HCT116 (cell line): ENCODE measurements at regions of chr2 and their contacts with region 1.

Region 1: GRCh38 chr2:241659150-241659739 is 21.8 kb downstream of the ATG4B start:
- DNase-seq: no peak
- ATAC-seq: peak; percentile 76
- H3K4me3 ChIP-seq: no peak overlapping the region
- H3K27ac ChIP-seq: no peak overlapping the region
- H3K4me1 ChIP-seq: no peaks in the 10 kb centered on the region
- H3K27me3 ChIP-seq: no peaks in the 10 kb centered on the region
- CTCF ChIP-seq: peak; percentile 38 to 62 (median 54); a peak in 4 of 6 replicates
- POLR2A ChIP-seq: no peak
- RAD21 ChIP-seq: peak; percentile 69

Region 2: GRCh38 chr2:241482176-241482955 is 176.9 kb before region 1 on chr2:
- CTCF ChIA-PET with region 1: no interaction called
- POLR2A ChIA-PET with region 1: no interaction called
- RAD21 ChIA-PET with region 1: no interaction called
- intact Hi-C with region 1: no loop called
- DNase-seq: no peak
- ATAC-seq: no peak
- H3K4me3 ChIP-seq: no peak overlapping the region
- H3K27ac ChIP-seq: no peak overlapping the region
- H3K4me1 ChIP-seq: no peaks in the 10 kb centered on the region
- H3K27me3 ChIP-seq: no peaks in the 10 kb centered on the region
- CTCF ChIP-seq: no peak
- POLR2A ChIP-seq: no peak
- RAD21 ChIP-seq: no peak

Region 3: DNA sequence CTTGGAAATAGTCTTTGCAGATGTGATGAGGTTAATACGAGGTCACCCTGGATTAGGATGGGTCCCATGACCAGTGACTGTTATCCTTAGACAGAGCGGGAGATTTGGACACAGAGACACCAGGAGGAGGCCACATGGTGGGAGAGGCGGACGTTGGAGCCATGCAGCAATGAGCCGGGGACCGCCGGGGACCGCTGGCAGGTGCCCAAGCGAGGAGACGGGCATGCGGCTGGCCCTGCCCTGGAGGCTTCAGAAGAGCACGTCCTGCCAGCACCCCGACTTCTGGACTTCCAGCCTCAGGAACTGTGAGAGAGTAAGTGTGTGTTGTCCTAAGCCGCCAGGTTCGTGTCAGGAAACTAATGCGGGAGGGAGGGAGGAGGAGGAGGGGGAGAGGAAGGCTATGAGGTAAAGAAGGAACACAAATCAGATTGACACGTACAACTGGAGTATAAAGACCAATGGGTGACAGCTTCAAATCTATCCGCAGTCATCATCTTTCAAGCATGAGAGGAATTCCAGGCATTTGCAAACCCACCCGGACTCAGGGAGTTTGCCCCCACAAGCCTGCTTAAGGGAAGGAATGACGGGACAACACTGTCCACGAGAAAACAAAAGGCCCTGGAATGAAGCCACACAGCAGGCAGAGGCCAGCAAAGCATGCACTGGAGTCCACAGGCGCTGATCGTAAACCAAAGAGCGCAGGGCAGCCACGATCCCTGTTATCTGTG is 112.3 kb before region 1 on chr2:
- CTCF ChIA-PET with region 1: no interaction called
- POLR2A ChIA-PET with region 1: no interaction called
- RAD21 ChIA-PET with region 1: interaction called in 1 of 2 experiments, 4 read pairs
- intact Hi-C with region 1: loop called (anchors 1 kb)
- DNase-seq: no peak
- ATAC-seq: no peak
- H3K4me3 ChIP-seq: no peak overlapping the region
- H3K27ac ChIP-seq: no peak overlapping the region
- H3K4me1 ChIP-seq: peaks cover 9 to 37% of the 10 kb centered on the region in 2 experiments
- H3K27me3 ChIP-seq: no peaks in the 10 kb centered on the region
- CTCF ChIP-seq: no peak
- POLR2A ChIP-seq: no peak
- RAD21 ChIP-seq: no peak

Region 4: DNA sequence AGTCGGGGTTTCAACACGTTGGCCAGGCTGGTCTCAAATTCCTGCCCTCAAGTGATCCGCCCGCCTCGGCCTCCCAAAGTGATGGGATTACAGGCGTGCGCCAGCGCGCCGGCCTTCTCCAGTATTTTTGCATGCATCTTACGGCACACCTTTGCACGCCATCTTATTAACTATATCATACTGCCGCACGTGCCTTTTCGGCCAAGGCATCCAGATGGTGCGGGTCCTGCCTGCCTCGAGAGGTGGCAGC is 41.8 kb after region 1 on chr2:
- CTCF ChIA-PET with region 1: no interaction called
- POLR2A ChIA-PET with region 1: no interaction called
- RAD21 ChIA-PET with region 1: no interaction called
- intact Hi-C with region 1: no loop called
- DNase-seq: no peak
- ATAC-seq: no peak
- H3K4me3 ChIP-seq: peak overlapping the region; percentile 62 to 67
- H3K27ac ChIP-seq: peak overlapping the region; percentile 99
- H3K4me1 ChIP-seq: peaks cover 22 to 42% of the 10 kb centered on the region in 2 experiments
- H3K27me3 ChIP-seq: no peaks in the 10 kb centered on the region
- CTCF ChIP-seq: peak in 1 of 3 experiments; percentile 40; a peak in 2 of 6 replicates
- POLR2A ChIP-seq: no peak
- RAD21 ChIP-seq: no peak